ENCODE measurements at regions of chr16 and their contacts with region 1.

Region 1: DNA sequence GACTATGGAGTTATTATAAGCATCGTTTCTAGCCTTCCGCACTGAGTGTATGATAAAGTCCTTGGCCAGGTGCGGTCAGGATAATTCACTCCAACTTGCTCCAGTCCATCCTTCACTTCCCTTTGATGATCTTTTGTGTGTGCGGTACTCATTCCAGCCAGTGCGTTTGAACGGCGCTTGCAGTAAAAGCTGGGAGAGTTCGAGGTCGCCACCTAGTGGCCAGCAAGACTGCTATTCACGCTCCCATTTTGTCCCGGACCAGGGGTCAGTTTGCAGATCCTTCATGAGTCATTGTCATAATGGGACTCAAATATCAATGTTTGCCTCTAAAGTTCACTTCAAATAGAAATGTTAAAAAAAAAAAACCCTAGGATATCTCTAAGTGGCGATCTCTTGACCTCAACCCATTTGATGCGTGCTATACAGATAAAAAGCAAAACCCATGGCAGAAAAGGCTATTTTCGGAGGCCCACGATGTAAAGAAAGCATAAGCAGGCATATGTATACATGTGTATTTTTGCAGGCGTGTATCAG is 417.1 kb downstream of the TMEM114 start:
- DNase-seq: peak; percentile 2
- ATAC-seq: peak; percentile 82
- H3K4me3 ChIP-seq: no peak overlapping the region
- H3K27ac ChIP-seq: no peak overlapping the region
- H3K4me1 ChIP-seq: no peaks in the 10 kb centered on the region
- H3K27me3 ChIP-seq: no peaks in the 10 kb centered on the region
- CTCF ChIP-seq: peak; percentile 63 to 78 (median 70)
- EP300 ChIP-seq: no peak
- POLR2A ChIP-seq: no peak
- RAD21 ChIP-seq: peak; percentile 47

Region 2: GRCh38 chr16:6682142-6682811 is 1490.9 kb before region 1 on chr16:
- CTCF ChIA-PET with region 1: interaction called, 8 read pairs
- POLR2A ChIA-PET with region 1: no interaction called
- RAD21 ChIA-PET with region 1: interaction called, 6 read pairs
- SMC1A ChIA-PET with region 1: interaction called, 4 read pairs
- in situ Hi-C with region 1: no loop called
- intact Hi-C with region 1: loop called (anchors 2 kb)
- DNase-seq: no peak
- ATAC-seq: no peak
- H3K4me3 ChIP-seq: no peak overlapping the region
- H3K27ac ChIP-seq: no peak overlapping the region
- H3K4me1 ChIP-seq: no peaks in the 10 kb centered on the region
- H3K27me3 ChIP-seq: no peaks in the 10 kb centered on the region
- CTCF ChIP-seq: peak; percentile 39 to 51 (median 40); a peak in 5 of 6 replicates
- EP300 ChIP-seq: no peak
- POLR2A ChIP-seq: no peak
- RAD21 ChIP-seq: no peak

Region 3: DNA sequence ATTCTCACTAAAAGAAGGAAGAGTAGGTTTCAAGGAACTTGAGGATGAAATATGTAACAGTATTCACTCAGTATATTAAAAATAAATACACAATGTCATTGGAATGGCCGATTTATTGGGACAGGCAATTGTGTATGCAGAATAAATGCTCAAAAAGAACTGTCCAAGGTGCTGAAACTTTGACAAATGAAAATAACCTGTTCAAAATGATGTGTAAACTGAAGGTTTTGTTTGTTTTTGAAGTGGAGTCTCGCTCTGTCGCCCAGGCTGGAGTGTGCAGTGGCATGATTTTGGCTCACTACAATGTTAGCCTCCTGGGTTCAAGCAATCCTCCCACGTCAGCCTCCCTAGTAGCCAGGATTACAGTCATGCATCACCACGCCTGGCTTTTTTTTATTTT is 1159.2 kb before region 1 on chr16:
- CTCF ChIA-PET with region 1: no interaction called
- POLR2A ChIA-PET with region 1: no interaction called
- RAD21 ChIA-PET with region 1: no interaction called
- SMC1A ChIA-PET with region 1: no interaction called
- in situ Hi-C with region 1: loop called (anchors 25 kb)
- intact Hi-C with region 1: no loop called
- DNase-seq: no peak
- ATAC-seq: no peak
- H3K4me3 ChIP-seq: no peak overlapping the region
- H3K27ac ChIP-seq: no peak overlapping the region
- H3K4me1 ChIP-seq: no peaks in the 10 kb centered on the region
- H3K27me3 ChIP-seq: no peaks in the 10 kb centered on the region
- CTCF ChIP-seq: no peak
- EP300 ChIP-seq: no peak
- POLR2A ChIP-seq: no peak
- RAD21 ChIP-seq: no peak

Region 4: GRCh38 chr16:7025616-7026190 is 1147.5 kb before region 1 on chr16:
- CTCF ChIA-PET with region 1: interaction called, 3 read pairs
- POLR2A ChIA-PET with region 1: no interaction called
- RAD21 ChIA-PET with region 1: no interaction called
- SMC1A ChIA-PET with region 1: no interaction called
- in situ Hi-C with region 1: loop called (anchors 25 kb)
- intact Hi-C with region 1: loop called (anchors 5 kb)
- DNase-seq: no peak
- ATAC-seq: peak; percentile 50; the same call in 1 of the 3 replicates
- H3K4me3 ChIP-seq: no peak overlapping the region
- H3K27ac ChIP-seq: no peak overlapping the region
- H3K4me1 ChIP-seq: no peaks in the 10 kb centered on the region
- H3K27me3 ChIP-seq: no peaks in the 10 kb centered on the region
- CTCF ChIP-seq: peak; percentile 22 to 46 (median 41); a peak in 3 of 6 replicates
- EP300 ChIP-seq: no peak
- POLR2A ChIP-seq: no peak
- RAD21 ChIP-seq: peak; percentile 33; the same call in 1 of the 2 replicates

Region 5: GRCh38 chr16:8158051-8158450 is 15.1 kb before region 1 on chr16:
- CTCF ChIA-PET with region 1: no interaction called
- POLR2A ChIA-PET with region 1: no interaction called
- RAD21 ChIA-PET with region 1: no interaction called
- SMC1A ChIA-PET with region 1: no interaction called
- in situ Hi-C with region 1: no loop called
- intact Hi-C with region 1: no loop called
- DNase-seq: no peak
- ATAC-seq: no peak
- H3K4me3 ChIP-seq: no peak overlapping the region
- H3K27ac ChIP-seq: no peak overlapping the region
- H3K4me1 ChIP-seq: no peaks in the 10 kb centered on the region
- H3K27me3 ChIP-seq: no peaks in the 10 kb centered on the region
- CTCF ChIP-seq: no peak
- EP300 ChIP-seq: no peak
- POLR2A ChIP-seq: no peak
- RAD21 ChIP-seq: no peak